Heart right ventricle (tissue), 16 donors: ENCODE measurements at regions of chr9 and their contacts with region 1.

Region 1: DNA sequence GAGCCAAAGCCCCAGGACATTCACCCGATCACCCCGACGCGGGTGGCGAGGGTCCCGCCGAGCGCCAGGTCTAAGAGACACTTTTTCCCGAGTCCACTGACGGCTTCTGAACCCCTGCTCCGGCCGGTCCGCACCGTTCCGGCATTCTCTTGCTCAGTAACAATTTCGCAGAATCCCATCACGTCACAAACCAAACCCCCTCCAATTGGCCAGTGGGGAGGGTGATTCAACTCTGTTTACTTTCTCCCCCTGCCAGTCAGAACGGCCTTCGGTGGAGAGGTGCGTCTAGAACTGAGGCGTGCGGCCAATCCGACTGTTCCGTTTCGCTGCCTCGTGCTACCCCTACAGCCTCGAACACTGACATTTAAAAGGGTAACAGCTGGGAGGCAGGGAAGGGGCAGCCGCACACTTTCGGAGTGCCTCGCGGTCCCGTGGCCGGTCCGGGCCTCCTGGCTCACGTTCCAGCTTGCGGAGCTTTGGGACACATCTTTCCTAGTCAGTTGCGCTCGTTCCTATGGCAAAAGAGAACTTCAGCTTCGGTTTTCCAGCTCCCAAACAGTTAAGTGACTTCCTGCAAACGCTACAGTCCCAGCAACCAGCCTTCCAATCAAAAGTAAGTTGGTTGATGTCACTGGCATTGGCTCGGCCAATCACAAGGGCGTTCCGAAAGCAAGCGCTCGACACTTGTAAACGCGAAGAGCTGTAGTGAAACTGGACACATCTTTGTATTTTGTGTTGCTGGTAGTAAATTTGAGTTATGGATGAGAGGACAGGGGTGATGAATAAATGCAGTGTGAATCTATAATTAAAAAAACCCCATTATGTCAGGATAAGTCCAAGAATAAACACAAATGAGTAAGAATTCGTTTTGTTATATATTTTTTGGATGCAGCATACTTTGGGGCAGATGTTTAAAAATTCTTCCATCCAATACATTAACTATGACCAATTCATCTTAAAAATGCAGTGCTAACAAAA is at the start of gene KLF9:
- DNase-seq: peak; percentile 87 to 96
- ATAC-seq: peak; percentile 74 to 85 (median 81)
- H3K4me3 ChIP-seq: peak within 1 kb of the TSS; percentile 69 to 99 (median 78)
- H3K27ac ChIP-seq: peak within 1 kb of the TSS; percentile 99 to 100 (median 100)
- H3K4me1 ChIP-seq: peaks cover 12 to 67% (median 60%) of the 10 kb centered on the region in 9 donors
- H3K27me3 ChIP-seq: no peaks in the 10 kb centered on the region
- CTCF ChIP-seq: peak in 1 of 9 donors; percentile 10
- total RNA-seq, gene KLF9: 27.3 to 67.4 (median 41.1) TPM

Region 2: DNA sequence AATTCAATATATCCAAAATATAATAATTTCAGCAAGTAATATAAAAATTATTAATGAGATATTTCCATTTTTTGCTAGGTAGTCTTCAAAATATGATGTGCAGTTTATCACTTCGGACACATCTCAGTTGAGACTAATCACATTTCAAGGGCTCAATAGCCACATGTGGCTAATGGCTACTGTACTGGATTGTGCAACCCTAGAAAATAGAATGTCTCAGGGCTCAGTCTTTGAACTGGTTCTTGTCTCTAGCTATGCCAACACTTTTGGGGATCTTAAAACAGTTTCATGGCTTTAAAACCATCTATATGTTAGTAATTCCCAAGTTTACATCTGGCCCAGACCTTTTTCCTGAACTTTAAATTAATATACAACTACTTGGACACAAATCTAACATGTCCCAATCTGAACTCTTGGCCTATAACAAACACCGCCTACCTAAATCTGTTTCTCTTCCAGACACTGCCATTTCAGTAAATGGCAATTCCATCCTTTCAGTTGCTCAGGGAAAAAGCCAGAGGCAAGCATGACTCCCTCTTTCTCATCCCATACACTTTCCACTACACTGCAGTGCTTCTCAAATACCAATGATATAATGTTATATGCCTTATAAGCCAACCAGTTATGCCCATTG is 673.1 kb before region 1 on chr9:
- intact Hi-C with region 1: no loop called
- DNase-seq: no peak
- ATAC-seq: no peak
- H3K4me3 ChIP-seq: no peak overlapping the region
- H3K27ac ChIP-seq: no peak overlapping the region
- H3K4me1 ChIP-seq: peaks cover 0 to 16% (median 8%) of the 10 kb centered on the region in 9 donors
- H3K27me3 ChIP-seq: no peaks in the 10 kb centered on the region
- CTCF ChIP-seq: no peak

Region 3: GRCh38 chr9:70466976-70467561 is 53.0 kb after region 1 on chr9:
- intact Hi-C with region 1: no loop called
- DNase-seq: no peak
- ATAC-seq: peak in 2 of 8 donors; percentile 1 to 53
- H3K4me3 ChIP-seq: no peak overlapping the region
- H3K27ac ChIP-seq: peak overlapping the region in 3 of 10 donors; percentile 45 to 75 (median 65)
- H3K4me1 ChIP-seq: peaks cover 14 to 57% (median 36%) of the 10 kb centered on the region in 9 donors
- H3K27me3 ChIP-seq: no peaks in the 10 kb centered on the region
- CTCF ChIP-seq: peak in 1 of 9 donors; percentile 14

Region 4: GRCh38 chr9:70587201-70587600 is 173.1 kb after region 1 on chr9:
- intact Hi-C with region 1: loop called in 2 of 10 experiments (anchors 5 kb)
- DNase-seq: peak in 1 of 2 donors; percentile 36
- ATAC-seq: peak; percentile 65 to 89 (median 80)
- H3K4me3 ChIP-seq: no peak overlapping the region
- H3K27ac ChIP-seq: peak overlapping the region; percentile 69 to 91 (median 80)
- H3K4me1 ChIP-seq: peaks cover 22 to 64% (median 58%) of the 10 kb centered on the region in 9 donors
- H3K27me3 ChIP-seq: no peaks in the 10 kb centered on the region
- CTCF ChIP-seq: no peak